ENCODE measurements at regions of chr14 and their contacts with region 1.

Region 1: DNA sequence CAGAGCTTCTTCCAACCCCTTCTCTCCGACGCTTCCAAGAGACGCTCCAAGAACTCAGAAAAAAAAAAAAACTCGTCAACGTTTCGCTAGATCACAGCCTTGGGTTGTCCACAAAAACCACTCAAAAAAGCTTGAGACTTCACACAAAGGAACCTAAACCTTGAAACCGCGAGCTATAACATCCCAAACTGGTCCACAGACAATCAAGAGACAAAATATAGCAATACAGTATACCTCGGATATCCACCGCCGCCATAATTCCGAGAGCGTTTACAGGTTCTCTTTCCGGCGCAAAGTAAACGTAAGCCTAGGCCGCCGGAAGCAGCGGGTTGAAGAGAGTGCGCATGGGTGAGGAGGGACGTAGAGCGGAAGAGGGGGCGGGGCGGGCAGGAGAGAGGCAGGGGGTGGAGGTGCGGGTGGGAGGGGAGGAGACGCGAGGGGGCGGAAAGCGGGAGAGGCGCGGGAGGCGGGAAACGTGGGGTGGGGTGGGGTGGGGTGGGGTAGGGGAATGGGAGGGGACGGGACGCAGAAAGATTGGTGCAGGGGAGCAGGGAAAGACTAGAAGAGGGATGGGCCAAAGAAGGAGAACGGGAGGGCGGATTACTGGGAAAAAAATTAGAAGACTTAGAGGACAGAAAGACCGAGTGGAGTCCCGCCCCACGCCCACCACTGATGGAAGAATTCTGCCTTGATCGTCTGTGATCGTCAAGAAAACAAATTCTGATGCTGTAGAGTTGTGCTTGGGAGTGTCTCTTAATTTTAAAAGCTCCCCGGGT is at the start of gene MED6:
- DNase-seq: peak; percentile 86 to 91
- H3K4me3 ChIP-seq: peak within 1 kb of the TSS; percentile 68
- H3K27ac ChIP-seq: peak within 1 kb of the TSS; percentile 58
- H3K4me1 ChIP-seq: peaks cover 19% of the 10 kb centered on the region
- H3K27me3 ChIP-seq: no peaks in the 10 kb centered on the region
- CTCF ChIP-seq: no peak
- total RNA-seq, gene MED6: 46.5 and 58.2 TPM in 2 replicates

Region 2: DNA sequence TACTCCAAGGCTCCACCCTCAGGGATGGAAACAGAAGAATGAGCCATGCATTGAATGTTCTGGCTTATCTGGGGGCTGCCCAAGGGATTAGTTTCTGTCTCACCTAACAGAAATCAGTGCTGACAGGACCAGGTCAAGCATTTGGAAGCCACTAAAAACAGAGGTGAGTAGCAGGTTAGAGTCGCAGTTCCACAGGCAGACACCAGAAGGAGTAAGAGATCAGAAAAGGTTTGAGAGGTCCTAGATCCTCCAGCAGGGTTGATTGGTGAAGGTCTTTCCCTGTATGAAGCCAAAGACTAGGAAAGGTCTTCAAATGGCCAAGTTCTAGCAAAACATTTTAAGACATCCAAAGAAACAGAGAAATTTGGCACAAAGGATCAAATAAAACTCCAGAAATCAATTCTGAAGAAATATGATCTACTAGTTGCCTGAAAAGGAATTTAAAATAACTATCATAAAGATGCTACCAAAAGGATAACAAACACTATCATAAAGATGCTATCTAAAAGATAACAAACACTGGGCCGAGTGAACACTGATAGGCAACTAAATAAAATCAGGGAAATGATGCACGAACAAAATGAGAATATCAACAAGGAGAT is 21.6 kb after region 1 on chr14:
- CTCF ChIA-PET with region 1: interaction called, 17 read pairs
- POLR2A ChIA-PET with region 1: no interaction called
- intact Hi-C with region 1: no loop called
- DNase-seq: peak in 1 of 2 experiments; percentile 54
- H3K4me3 ChIP-seq: no peak overlapping the region
- H3K27ac ChIP-seq: no peak overlapping the region
- H3K4me1 ChIP-seq: peaks cover under 1% of the 10 kb centered on the region; the same call in 1 of the 2 replicates
- H3K27me3 ChIP-seq: no peaks in the 10 kb centered on the region
- CTCF ChIP-seq: peak; percentile 94

Region 3: DNA sequence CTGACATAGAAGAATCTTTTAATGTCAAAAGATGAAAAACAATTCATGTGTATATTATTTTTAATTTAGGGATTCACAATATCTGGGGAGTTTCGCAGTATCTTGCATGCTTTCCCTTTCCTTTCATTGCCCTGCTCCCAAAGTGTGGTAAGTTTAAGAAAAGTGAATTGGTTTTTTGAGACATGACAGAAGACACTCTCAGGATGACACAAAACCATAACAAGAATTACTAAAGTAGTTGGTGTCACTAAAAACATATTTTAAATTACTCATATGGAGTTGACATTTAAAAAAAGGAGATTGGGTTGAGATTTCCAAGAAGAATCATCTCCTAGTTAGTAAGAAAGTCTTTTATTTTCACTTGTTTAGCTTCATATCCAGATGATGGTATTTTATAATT is 301.6 kb after region 1 on chr14:
- CTCF ChIA-PET with region 1: no interaction called
- POLR2A ChIA-PET with region 1: interaction called, 10 read pairs
- intact Hi-C with region 1: loop called (anchors 5 kb)
- DNase-seq: no peak
- H3K4me3 ChIP-seq: no peak overlapping the region
- H3K27ac ChIP-seq: no peak overlapping the region
- H3K4me1 ChIP-seq: 0 out of 2 replicates have a peak, but pooled peaks cover 11% of the 10 kb centered on the region
- H3K27me3 ChIP-seq: no peaks in the 10 kb centered on the region
- CTCF ChIP-seq: no peak

Region 4: DNA sequence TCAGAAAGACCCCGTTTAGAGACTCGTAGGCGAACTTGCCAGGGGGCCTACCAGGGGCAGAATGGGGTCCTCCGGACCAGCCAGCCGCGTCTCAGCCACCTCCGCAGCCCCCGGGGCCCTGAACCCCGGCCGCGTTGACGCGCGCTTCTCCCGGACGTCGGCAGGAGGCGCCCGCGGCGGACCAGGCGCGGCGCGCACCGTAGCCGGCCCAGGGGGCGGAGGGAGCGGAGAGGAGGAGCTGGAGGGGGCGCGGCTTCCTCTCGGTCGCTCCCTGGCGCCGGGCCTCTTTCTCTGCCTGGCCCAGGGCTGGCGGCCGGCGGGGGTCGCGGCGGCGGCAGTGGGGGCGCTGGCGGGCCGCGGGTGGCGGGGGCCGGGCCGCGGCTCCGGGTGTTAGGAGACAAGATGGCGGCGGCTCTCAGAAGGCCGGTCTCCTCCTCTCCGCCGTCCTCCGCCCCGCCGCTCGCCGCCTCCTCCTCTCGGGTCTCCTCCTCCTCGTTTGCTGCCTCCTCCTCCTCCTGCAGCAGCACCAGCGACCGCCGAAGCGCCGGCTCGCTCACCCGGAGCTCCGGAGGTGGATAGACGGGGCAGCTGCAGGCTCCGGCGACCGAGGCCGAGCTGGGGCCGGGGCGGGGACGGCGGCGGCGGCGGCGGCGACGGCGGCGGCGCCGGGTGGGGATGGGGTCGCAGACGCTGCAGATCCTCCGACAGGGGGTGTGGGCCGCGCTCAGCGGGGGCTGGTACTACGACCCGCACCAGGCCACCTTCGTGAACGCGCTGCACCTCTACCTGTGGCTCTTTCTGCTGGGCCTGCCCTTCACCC is 306.8 kb after region 1 on chr14 and contains the start of gene PCNX1:
- CTCF ChIA-PET with region 1: no interaction called
- POLR2A ChIA-PET with region 1: interaction called, 10 read pairs
- intact Hi-C with region 1: loop called (anchors 5 kb)
- DNase-seq: peak; percentile 73 to 91
- H3K4me3 ChIP-seq: peak within 1 kb of the TSS; percentile 68
- H3K27ac ChIP-seq: peak within 1 kb of the TSS; percentile 68
- H3K4me1 ChIP-seq: peaks cover 15% of the 10 kb centered on the region
- H3K27me3 ChIP-seq: no peaks in the 10 kb centered on the region
- CTCF ChIP-seq: peak; percentile 77
- total RNA-seq, gene PCNX1: 37.6 and 67.8 TPM in 2 replicates

Region 5: GRCh38 chr14:72142328-72142727 is 1541.8 kb after region 1 on chr14:
- CTCF ChIA-PET with region 1: interaction called, 12 read pairs
- POLR2A ChIA-PET with region 1: no interaction called
- intact Hi-C with region 1: no loop called
- DNase-seq: no peak
- H3K4me3 ChIP-seq: no peak overlapping the region
- H3K27ac ChIP-seq: no peak overlapping the region
- H3K4me1 ChIP-seq: no peaks in the 10 kb centered on the region
- H3K27me3 ChIP-seq: no peaks in the 10 kb centered on the region
- CTCF ChIP-seq: no peak